H1 (cell line): ENCODE measurements at regions of chr11 and their contacts with region 1.

Region 1: GRCh38 chr11:1827095-1827813 is 7.5 kb upstream of the SYT8 start:
- DNase-seq: no peak
- H3K4me3 ChIP-seq: no peak overlapping the region
- H3K27ac ChIP-seq: no peak overlapping the region
- H3K4me1 ChIP-seq: peaks cover 0 to 2% (median 0%) of the 10 kb centered on the region in 4 experiments; a peak in 4 of 7 replicates
- H3K27me3 ChIP-seq: peaks cover 0 to 6% (median 1%) of the 10 kb centered on the region in 4 experiments; a peak in 1 of 7 replicates
- CTCF ChIP-seq: no peak
- EP300 ChIP-seq: no peak
- POLR2A ChIP-seq: no peak
- RAD21 ChIP-seq: no peak

Region 2: GRCh38 chr11:1652771-1653540 is 174.3 kb before region 1 on chr11:
- CTCF ChIA-PET with region 1: interaction called, 117 read pairs
- POLR2A ChIA-PET with region 1: no interaction called
- DNase-seq: peak in 1 of 2 experiments; percentile 95
- H3K4me3 ChIP-seq: peak overlapping the region in 3 of 4 experiments; percentile 19 to 53 (median 26); a peak in 4 of 8 replicates
- H3K27ac ChIP-seq: no peak overlapping the region
- H3K4me1 ChIP-seq: peaks cover 0 to 6% (median 2%) of the 10 kb centered on the region in 4 experiments; a peak in 3 of 7 replicates
- H3K27me3 ChIP-seq: peaks cover 0 to 9% (median 6%) of the 10 kb centered on the region in 4 experiments; a peak in 4 of 7 replicates
- CTCF ChIP-seq: peak; percentile 76 to 92 (median 88)
- EP300 ChIP-seq: no peak
- POLR2A ChIP-seq: no peak
- RAD21 ChIP-seq: peak; percentile 94 to 97

Region 3: DNA sequence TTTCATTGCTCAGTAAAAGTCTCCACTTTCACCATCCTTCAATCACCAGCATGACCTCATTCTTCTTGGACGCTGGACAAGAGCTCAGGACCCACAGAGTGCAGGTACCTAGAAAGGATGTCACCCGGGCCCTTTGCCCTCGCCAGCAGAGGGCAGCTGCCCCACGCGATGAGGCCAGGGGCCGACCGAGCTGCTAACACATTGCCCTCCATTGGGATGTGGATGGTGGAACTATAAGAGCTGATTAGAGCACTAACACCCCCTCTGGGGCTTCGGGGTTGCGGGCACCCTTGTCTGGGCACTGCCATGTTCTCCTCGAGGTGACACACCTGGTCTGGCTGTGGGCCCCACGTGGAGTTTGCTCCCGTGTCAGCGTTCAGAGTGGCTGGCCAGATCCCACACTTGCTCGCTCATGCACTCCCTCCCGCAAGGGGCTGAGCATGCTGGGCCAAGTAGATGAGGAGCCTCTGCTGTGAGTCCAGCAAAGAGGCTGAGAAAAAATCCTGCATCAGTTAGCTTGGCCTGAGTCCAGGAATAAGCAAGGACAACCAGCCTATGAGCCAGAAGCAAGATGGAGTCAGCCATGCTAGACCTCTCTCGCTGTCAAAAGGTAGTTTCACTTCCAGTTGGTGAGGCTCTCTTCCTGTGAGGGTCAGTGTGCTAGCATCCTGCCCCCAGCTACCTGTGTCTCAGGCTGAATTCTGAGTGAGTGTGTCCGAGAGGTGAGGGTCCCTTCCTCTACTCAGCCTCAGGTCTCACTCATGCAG is 120.4 kb before region 1 on chr11:
- CTCF ChIA-PET with region 1: interaction called, 19 read pairs
- POLR2A ChIA-PET with region 1: no interaction called
- DNase-seq: no peak
- H3K4me3 ChIP-seq: no peak overlapping the region
- H3K27ac ChIP-seq: no peak overlapping the region
- H3K4me1 ChIP-seq: no peaks in the 10 kb centered on the region
- H3K27me3 ChIP-seq: peaks cover 0 to 5% (median 2%) of the 10 kb centered on the region in 4 experiments; a peak in 1 of 7 replicates
- CTCF ChIP-seq: peak; percentile 74 to 80 (median 80)
- EP300 ChIP-seq: no peak
- POLR2A ChIP-seq: no peak
- RAD21 ChIP-seq: peak; percentile 81 to 83

Region 4: DNA sequence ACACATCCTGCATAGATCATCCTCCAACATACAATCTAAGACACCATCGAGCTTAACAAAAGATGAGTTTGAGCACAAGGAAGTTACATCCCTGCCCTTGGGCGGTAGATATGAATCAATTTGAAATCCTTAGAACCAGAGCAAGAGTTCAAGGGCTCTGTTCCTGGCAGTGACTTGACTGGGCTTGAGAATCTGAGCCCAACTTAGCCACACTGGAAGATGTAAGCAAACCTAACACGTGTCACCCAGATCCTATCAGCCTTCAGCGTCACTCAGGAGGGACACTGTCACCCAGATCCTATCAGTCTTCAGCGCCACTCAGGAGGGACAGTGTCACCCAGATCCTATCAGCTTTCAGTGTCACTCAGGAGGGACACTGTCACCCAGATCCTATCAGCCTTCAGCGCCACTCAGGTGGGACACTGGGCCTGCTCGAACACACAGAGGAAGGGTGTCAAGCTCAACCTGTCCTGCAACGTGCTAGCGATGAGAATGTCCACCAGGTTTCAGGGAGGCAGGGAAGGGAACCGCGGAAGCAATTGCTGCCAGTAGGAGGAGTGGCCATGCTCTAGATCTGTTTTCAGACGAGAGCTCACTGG is 30.7 kb before region 1 on chr11:
- CTCF ChIA-PET with region 1: interaction called, 11 read pairs
- POLR2A ChIA-PET with region 1: no interaction called
- DNase-seq: no peak
- H3K4me3 ChIP-seq: no peak overlapping the region
- H3K27ac ChIP-seq: no peak overlapping the region
- H3K4me1 ChIP-seq: no peaks in the 10 kb centered on the region
- H3K27me3 ChIP-seq: peaks cover 0 to 3% (median 1%) of the 10 kb centered on the region in 4 experiments; a peak in 2 of 7 replicates
- CTCF ChIP-seq: peak; percentile 36 to 65 (median 51)
- EP300 ChIP-seq: no peak
- POLR2A ChIP-seq: no peak
- RAD21 ChIP-seq: peak in 1 of 2 experiments; percentile 12; a peak in 1 of 4 replicates

Region 5: DNA sequence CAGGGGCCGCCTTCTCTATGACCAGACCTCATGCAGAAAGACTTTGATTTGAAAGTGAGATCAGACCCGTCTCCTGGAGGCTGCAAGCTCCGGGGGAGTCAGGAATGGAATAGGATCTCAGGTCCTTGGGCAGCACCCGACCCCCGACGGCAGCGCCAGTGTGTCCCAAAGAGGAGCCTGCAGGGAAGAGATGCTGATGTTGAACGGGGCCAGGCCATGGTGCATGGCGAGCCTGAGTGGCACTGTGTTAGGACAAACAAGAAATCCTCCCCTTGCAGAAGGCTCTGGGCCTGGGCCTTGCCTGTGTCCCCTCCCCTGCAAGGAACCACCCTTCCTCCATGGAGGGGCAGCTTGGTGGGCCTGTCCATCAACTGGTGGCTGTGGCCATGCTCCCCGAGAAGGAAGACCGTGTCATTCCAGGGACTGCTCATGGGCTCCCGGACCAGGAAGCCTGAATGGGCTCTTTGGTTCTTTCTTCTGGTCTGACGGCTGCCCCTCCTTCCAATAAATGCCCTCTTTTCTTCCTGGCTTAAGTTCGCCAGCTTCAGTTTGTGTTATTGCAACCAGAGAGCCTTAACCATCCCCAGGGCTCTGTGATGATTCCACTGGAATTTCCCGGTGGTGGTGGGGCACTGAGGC is 12.5 kb before region 1 on chr11:
- CTCF ChIA-PET with region 1: interaction called, 44 read pairs
- POLR2A ChIA-PET with region 1: no interaction called
- DNase-seq: no peak
- H3K4me3 ChIP-seq: no peak overlapping the region
- H3K27ac ChIP-seq: no peak overlapping the region
- H3K4me1 ChIP-seq: no peaks in the 10 kb centered on the region
- H3K27me3 ChIP-seq: no peaks in the 10 kb centered on the region; a peak in 1 of 7 replicates
- CTCF ChIP-seq: no peak
- EP300 ChIP-seq: no peak
- POLR2A ChIP-seq: no peak
- RAD21 ChIP-seq: no peak

Region 6: GRCh38 chr11:1870721-1871466 is 43.6 kb after region 1 on chr11:
- CTCF ChIA-PET with region 1: interaction called, 24 read pairs
- POLR2A ChIA-PET with region 1: no interaction called
- DNase-seq: no peak
- H3K4me3 ChIP-seq: no peak overlapping the region
- H3K27ac ChIP-seq: no peak overlapping the region
- H3K4me1 ChIP-seq: no peaks in the 10 kb centered on the region
- H3K27me3 ChIP-seq: peaks cover 0 to 3% (median 0%) of the 10 kb centered on the region in 4 experiments; a peak in 1 of 7 replicates
- CTCF ChIP-seq: no peak
- EP300 ChIP-seq: no peak
- POLR2A ChIP-seq: no peak
- RAD21 ChIP-seq: no peak